HEK293 (cell line): ENCODE measurements at regions of chr20 and their contacts with region 1.

Region 1: GRCh38 chr20:38073307-38074071 is 39.9 kb downstream of the RPRD1B start:
- H3K4me3 ChIP-seq: no peak overlapping the region
- H3K27ac ChIP-seq: no peak overlapping the region
- H3K4me1 ChIP-seq: peaks cover 7% of the 10 kb centered on the region; the same call in 1 of the 2 replicates
- CTCF ChIP-seq: no peak

Region 2: GRCh38 chr20:38084400-38084951 is 11.0 kb after region 1 on chr20:
- CTCF ChIA-PET with region 1: interaction called, 11 read pairs
- POLR2A ChIA-PET with region 1: interaction called, 5 read pairs
- H3K4me3 ChIP-seq: no peak overlapping the region
- H3K27ac ChIP-seq: no peak overlapping the region
- H3K4me1 ChIP-seq: peaks cover 8% of the 10 kb centered on the region
- CTCF ChIP-seq: no peak

Region 3: DNA sequence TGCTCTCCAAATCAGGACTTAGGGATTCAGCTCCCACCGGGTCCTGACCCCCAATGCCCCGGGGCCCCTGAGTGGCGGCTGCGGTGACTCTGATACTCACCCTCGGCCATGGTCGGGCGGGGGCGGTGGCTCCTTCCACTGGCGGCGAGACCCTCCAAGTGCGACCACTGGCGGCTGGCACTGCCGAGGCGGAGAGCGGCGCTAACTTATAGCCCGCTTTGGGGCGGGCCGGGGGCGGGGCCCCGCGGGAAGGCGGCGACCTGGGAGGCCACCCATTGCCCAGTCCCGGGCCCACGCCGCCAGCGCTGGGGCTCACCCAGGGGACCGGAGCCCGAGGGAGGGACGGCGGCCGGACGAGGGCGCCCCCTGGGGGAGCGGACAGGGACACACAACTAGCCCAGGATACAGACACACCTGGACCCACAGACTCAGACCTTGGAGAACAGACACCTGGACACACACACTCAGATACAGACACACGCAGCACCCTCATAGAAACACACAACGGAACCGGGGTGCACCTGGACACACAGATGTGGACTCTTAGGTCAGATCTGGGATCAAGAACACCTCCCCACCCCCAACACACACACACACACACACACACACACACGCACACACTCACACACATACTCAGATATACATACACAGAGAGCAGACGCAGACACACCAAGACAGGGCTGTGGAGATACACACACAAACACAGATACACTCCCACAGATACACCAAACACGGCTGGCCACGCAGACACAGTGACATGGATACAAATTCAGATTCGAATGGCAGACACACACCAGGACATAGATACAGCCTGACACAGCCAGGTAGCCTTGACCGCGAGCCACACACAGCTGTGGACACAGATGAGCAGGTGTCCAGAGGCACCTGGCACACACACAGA is 91.8 kb after region 1 on chr20 and contains the start of gene TGM2:
- CTCF ChIA-PET with region 1: interaction called, 30 read pairs
- POLR2A ChIA-PET with region 1: interaction called, 3 read pairs
- H3K4me3 ChIP-seq: peak within 1 kb of the TSS; percentile 32
- H3K27ac ChIP-seq: no peak within 1 kb of the TSS
- H3K4me1 ChIP-seq: no peaks in the 10 kb centered on the region
- CTCF ChIP-seq: peak; percentile 88